Activated CD4-positive, alpha-beta memory T cell treated with anti-CD3 and anti-CD28 coated beads for 36 hours (primary cell): ENCODE measurements at regions of chr12 and their contacts with region 1.

Region 1: GRCh38 chr12:100163416-100164152 is 20.9 kb upstream of the BLTP3B start:
- DNase-seq: peak; percentile 83
- H3K4me3 Mint-ChIP-seq: peak overlapping the region; percentile 45
- H3K27ac Mint-ChIP-seq: no peak overlapping the region
- H3K4me1 Mint-ChIP-seq: peaks cover 7% of the 10 kb centered on the region
- H3K27me3 Mint-ChIP-seq: no peaks in the 10 kb centered on the region

Region 2: DNA sequence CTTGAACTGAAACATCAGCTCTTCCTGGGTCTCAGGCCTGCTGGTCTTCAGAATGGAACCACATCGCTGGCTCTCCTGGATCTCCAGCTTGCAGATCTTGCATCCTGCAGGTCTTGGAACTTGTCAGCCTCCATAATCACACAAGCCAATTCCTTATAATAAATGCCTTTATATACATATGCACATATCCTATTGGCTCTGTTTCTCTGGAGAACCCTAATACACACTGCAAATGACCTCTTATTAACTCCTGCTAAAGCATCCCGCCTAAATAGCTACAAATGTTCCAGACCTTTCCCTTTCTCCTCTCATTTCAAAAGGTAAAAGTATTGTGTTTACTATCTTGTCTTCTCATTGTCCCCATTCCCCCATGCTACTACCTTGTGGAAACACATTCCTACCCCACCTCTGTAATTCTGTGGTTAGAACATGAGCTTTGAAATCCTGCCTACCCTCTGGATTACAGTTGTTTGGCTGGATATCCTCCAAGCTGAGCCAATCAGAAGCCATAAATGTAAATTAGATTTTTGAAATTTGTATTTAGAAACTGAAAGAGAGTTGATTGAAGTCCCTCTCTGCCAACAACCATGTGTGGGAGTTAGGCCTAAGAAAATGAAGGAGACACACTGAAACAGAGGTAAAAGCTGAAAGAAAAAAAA is 236.9 kb before region 1 on chr12:
- CTCF ChIA-PET with region 1: no interaction called
- POLR2A ChIA-PET with region 1: no interaction called
- intact Hi-C with region 1: no loop called
- DNase-seq: no peak
- H3K4me3 Mint-ChIP-seq: no peak overlapping the region
- H3K27ac Mint-ChIP-seq: no peak overlapping the region
- H3K4me1 Mint-ChIP-seq: no peaks in the 10 kb centered on the region
- H3K27me3 Mint-ChIP-seq: no peaks in the 10 kb centered on the region

Region 3: DNA sequence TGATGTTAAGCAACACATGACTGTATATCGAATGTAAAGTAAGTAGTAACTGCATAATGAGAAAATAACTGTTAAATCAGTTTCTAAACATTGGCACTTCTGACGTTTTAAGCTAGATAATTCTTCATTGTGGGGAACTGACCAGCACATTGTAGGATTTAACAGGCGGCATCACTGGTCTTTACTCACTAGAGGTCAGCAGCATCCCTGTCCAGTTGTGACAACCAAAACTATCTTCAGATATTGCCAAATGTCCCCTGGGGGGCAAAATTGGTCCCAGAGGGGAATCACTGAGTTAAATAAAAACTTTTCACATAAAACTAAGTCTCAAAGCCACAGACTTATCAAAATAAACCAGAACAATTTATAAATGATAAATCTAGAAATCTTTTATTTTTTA is 86.2 kb before region 1 on chr12:
- CTCF ChIA-PET with region 1: no interaction called
- POLR2A ChIA-PET with region 1: no interaction called
- intact Hi-C with region 1: no loop called
- DNase-seq: no peak
- H3K4me3 Mint-ChIP-seq: no peak overlapping the region
- H3K27ac Mint-ChIP-seq: no peak overlapping the region
- H3K4me1 Mint-ChIP-seq: no peaks in the 10 kb centered on the region
- H3K27me3 Mint-ChIP-seq: no peaks in the 10 kb centered on the region

Region 4: GRCh38 chr12:100200463-100201181 is 37.0 kb after region 1 on chr12 and contains the start of gene ACTR6:
- CTCF ChIA-PET with region 1: interaction called, 5 read pairs
- POLR2A ChIA-PET with region 1: no interaction called
- intact Hi-C with region 1: loop called (anchors 1 kb)
- DNase-seq: peak; percentile 98
- H3K4me3 Mint-ChIP-seq: peak within 1 kb of the TSS; percentile 96
- H3K27ac Mint-ChIP-seq: peak within 1 kb of the TSS; percentile 99
- H3K4me1 Mint-ChIP-seq: peaks cover 27% of the 10 kb centered on the region
- H3K27me3 Mint-ChIP-seq: no peaks in the 10 kb centered on the region
- total RNA-seq, gene ACTR6: 58.3 to 60.3 TPM